ENCODE measurements at regions of chr14 and their contacts with region 1.

Region 1: DNA sequence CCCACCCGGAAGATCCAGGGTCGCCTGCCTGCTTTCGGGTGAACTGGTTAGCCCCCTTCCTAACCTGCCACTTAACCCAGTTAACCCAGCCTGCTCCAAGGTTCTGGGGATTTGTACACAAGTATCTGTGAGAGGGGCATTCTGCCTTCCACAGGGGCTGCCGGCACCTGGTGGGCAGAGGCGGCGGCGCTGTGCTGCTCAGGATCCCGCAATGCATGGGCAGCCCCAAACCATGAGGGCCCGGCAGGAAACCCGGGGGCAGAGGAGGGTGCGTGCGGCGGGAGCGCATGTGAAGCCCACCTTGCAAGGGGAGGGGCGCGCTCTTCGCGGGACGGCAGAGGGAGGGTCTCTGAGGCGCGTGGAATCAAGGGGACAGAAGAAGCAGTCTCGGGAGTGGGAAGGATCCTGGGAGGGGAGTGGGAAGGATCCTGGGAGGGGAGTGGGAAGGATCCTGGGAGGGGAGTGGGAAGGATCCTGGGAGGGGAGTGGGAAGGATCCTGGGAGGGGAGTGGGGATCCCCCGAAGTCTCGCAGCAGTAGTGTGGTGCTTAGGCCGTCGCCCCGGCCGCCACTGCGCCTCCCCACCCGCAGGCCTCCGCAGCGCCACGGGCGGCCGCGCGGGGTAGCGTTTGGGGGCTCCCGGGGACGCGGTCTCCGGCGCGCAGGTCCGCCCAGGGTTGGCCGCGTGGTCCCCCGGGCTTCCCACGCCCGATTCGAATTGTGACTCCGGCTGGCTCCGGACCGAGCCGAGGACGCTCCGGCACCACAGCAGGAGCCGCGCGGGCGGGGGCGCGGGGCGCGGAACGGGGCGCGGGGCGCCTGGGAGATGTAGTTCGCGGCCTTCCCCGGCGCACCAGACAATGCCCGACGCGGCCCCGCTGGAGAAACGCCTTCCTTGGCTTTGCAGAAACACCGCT is 4.9 kb upstream of the MTA1 start:
- DNase-seq: peak; percentile 65
- ATAC-seq: peak; percentile 80
- H3K4me3 Mint-ChIP-seq: peak overlapping the region; percentile 68
- H3K27ac Mint-ChIP-seq: no peak overlapping the region
- H3K4me1 Mint-ChIP-seq: peaks cover 14% of the 10 kb centered on the region
- H3K27me3 Mint-ChIP-seq: peaks cover 12% of the 10 kb centered on the region
- CTCF ChIP-seq: no peak

Region 2: GRCh38 chr14:105398044-105398725 is 16.5 kb before region 1 on chr14 and contains the start of gene TEX22:
- CTCF ChIA-PET with region 1: interaction called, 3 read pairs
- POLR2A ChIA-PET with region 1: interaction called, 5 read pairs
- intact Hi-C with region 1: loop called (anchors 1 kb)
- DNase-seq: peak; percentile 99
- ATAC-seq: peak; percentile 86
- H3K4me3 Mint-ChIP-seq: peak within 1 kb of the TSS; percentile 90
- H3K27ac Mint-ChIP-seq: peak within 1 kb of the TSS; percentile 91
- H3K4me1 Mint-ChIP-seq: peaks cover 24% of the 10 kb centered on the region
- H3K27me3 Mint-ChIP-seq: no peaks in the 10 kb centered on the region
- CTCF ChIP-seq: no peak
- total RNA-seq, gene TEX22: 2.8 and 5.7 TPM in 2 replicates

Region 3: GRCh38 chr14:105474483-105475268 is 60.0 kb after region 1 on chr14 and contains the start of gene CRIP2:
- CTCF ChIA-PET with region 1: no interaction called
- POLR2A ChIA-PET with region 1: no interaction called
- intact Hi-C with region 1: loop called (anchors 5 kb)
- DNase-seq: peak; percentile 32
- ATAC-seq: peak; percentile 38
- H3K4me3 Mint-ChIP-seq: peak within 1 kb of the TSS; percentile 72
- H3K27ac Mint-ChIP-seq: no peak within 1 kb of the TSS
- H3K4me1 Mint-ChIP-seq: peaks cover 37% of the 10 kb centered on the region
- H3K27me3 Mint-ChIP-seq: peaks cover 3% of the 10 kb centered on the region
- CTCF ChIP-seq: no peak
- total RNA-seq, gene CRIP2: 2.9 and 3.0 TPM in 2 replicates

Measured in activated B cell treated with CpG ODN at 0.5 μM for 24 hours (primary cell).